ENCODE measurements at regions of chr11 and their contacts with region 1.

Region 1: GRCh38 chr11:79727221-79727620 is 286.4 kb upstream of the TENM4 start:
- DNase-seq: no peak
- H3K4me3 ChIP-seq: no peak overlapping the region
- H3K27ac ChIP-seq: no peak overlapping the region
- H3K4me1 ChIP-seq: no peaks in the 10 kb centered on the region
- H3K27me3 ChIP-seq: no peaks in the 10 kb centered on the region
- CTCF ChIP-seq: no peak
- POLR2A ChIP-seq: no peak

Region 2: DNA sequence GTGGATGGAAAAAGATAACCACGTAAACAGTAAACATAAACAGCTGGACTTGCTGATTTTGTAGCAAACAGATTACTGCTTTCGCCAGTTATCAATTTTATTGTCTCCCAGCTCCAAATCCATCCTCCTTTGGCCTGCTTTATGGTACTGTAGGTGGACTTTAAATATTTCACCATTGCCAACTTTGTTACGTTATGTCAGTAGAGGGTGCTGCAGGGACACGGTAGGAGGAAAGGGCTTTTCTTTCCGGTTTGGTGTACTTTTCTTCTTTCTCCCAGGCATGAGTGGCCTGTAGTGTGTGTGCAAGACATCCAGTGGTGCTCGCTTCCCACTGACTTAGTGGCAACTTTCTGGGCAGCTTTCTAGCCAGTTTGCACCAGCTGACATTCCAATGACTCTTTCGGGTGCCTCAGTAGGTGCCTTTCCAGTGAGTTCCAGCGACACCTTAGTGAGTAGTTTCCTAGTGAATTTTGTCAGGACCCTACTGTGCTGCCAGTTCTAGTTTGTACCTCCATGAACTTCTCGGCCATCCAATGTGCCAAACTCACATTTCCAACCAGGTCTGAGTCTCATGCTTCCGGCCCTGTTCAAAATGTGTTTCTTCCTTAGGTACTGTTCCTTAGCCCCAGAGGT is 18.8 kb before region 1 on chr11:
- CTCF ChIA-PET with region 1: no interaction called
- POLR2A ChIA-PET with region 1: no interaction called
- dilution Hi-C with region 1: no loop called
- intact Hi-C with region 1: no loop called
- DNase-seq: no peak
- H3K4me3 ChIP-seq: no peak overlapping the region
- H3K27ac ChIP-seq: no peak overlapping the region
- H3K4me1 ChIP-seq: no peaks in the 10 kb centered on the region
- H3K27me3 ChIP-seq: no peaks in the 10 kb centered on the region
- CTCF ChIP-seq: no peak
- POLR2A ChIP-seq: no peak

Region 3: GRCh38 chr11:79744941-79745340 is 17.7 kb after region 1 on chr11:
- CTCF ChIA-PET with region 1: no interaction called
- POLR2A ChIA-PET with region 1: no interaction called
- dilution Hi-C with region 1: no loop called
- intact Hi-C with region 1: no loop called
- DNase-seq: no peak
- H3K4me3 ChIP-seq: no peak overlapping the region
- H3K27ac ChIP-seq: no peak overlapping the region
- H3K4me1 ChIP-seq: no peaks in the 10 kb centered on the region
- H3K27me3 ChIP-seq: no peaks in the 10 kb centered on the region
- CTCF ChIP-seq: no peak
- POLR2A ChIP-seq: no peak

Region 4: DNA sequence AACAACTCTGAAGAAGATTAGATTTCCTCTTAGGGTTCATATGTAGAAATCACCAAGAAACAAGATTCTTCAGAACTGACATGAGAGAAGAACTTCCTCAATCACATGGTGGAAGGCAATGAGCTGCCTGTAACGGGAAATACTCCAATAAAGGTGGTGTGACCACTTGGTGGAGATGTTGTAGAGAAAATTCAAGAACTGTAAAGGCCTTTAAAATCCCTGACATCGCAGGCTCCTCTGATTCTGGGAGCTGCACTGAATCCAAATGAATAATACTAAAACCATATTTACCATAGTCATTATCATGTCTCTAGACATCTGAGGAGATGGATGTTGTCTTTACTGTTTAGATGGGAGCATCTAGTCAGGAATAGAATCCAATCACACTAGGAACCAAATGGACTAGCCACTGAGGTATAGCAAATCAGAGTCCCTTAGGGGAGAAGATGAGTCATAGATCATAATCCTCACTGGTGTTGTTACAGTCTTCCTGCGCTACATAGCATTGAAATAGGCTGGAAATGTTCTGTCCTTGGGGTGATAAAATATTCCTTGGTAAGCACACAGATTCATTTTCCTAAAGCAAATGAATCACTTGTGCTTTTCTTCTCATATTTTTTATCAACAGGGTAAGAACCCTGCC is 35.2 kb after region 1 on chr11:
- CTCF ChIA-PET with region 1: no interaction called
- POLR2A ChIA-PET with region 1: no interaction called
- dilution Hi-C with region 1: no loop called
- intact Hi-C with region 1: loop called (anchors 2 kb)
- DNase-seq: no peak
- H3K4me3 ChIP-seq: no peak overlapping the region
- H3K27ac ChIP-seq: no peak overlapping the region
- H3K4me1 ChIP-seq: no peaks in the 10 kb centered on the region
- H3K27me3 ChIP-seq: no peaks in the 10 kb centered on the region
- CTCF ChIP-seq: no peak
- POLR2A ChIP-seq: no peak

Measured in endothelial cell of umbilical vein (primary cell).